ENCODE measurements at regions of chr1 and their contacts with region 1.

Region 1: DNA sequence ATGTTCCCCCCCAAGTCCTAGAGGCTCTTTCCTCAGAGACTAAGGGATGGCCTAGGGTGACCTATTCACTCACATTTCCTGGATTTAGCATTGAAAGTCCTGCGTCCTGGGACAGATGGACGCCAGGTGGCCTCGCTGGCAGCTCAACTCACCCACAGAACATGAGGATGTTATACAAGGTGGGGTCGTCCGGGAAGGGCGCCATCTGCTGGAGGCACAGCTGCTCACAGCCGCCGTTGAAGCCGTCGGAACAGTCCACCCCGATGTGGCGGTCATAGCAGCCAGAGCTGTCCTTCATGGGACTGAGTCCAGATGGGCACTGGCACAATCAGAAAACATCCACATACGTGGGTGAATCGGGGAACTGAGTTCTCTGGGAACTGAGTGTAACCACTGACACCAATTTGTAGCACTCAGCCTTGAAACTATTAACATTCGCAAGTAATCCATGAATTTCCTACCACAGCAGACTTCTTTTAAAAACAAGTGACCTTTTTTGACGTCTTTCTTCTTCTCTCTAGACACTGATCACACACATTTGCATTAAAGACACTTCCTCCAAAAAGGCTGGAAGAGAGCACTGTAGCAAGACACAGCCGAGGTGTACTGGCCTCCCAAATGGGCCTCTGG is 215.4 kb downstream of the ASTN1 start:
- DNase-seq: peak; percentile 80 to 96
- H3K4me3 ChIP-seq: no peak overlapping the region
- H3K27ac ChIP-seq: no peak overlapping the region
- H3K4me1 ChIP-seq: peaks cover 0 to 11% (median 1%) of the 10 kb centered on the region in 4 experiments; a peak in 2 of 7 replicates
- H3K27me3 ChIP-seq: no peaks in the 10 kb centered on the region; a peak in 1 of 7 replicates
- CTCF ChIP-seq: peak; percentile 99
- EP300 ChIP-seq: no peak
- POLR2A ChIP-seq: no peak
- RAD21 ChIP-seq: peak; percentile 77 to 83

Region 2: GRCh38 chr1:176773038-176773437 is 176.1 kb before region 1 on chr1:
- CTCF ChIA-PET with region 1: no interaction called
- POLR2A ChIA-PET with region 1: no interaction called
- DNase-seq: no peak
- H3K4me3 ChIP-seq: no peak overlapping the region
- H3K27ac ChIP-seq: no peak overlapping the region
- H3K4me1 ChIP-seq: no peaks in the 10 kb centered on the region
- H3K27me3 ChIP-seq: no peaks in the 10 kb centered on the region
- CTCF ChIP-seq: no peak
- EP300 ChIP-seq: no peak
- POLR2A ChIP-seq: no peak
- RAD21 ChIP-seq: no peak

Region 3: GRCh38 chr1:176897350-176898236 is 51.6 kb before region 1 on chr1:
- CTCF ChIA-PET with region 1: interaction called, 279 read pairs
- POLR2A ChIA-PET with region 1: no interaction called
- DNase-seq: peak; percentile 70 to 94
- H3K4me3 ChIP-seq: peak overlapping the region in 3 of 4 experiments; percentile 10 to 59 (median 22); a peak in 5 of 8 replicates
- H3K27ac ChIP-seq: no peak overlapping the region
- H3K4me1 ChIP-seq: no peaks in the 10 kb centered on the region
- H3K27me3 ChIP-seq: no peaks in the 10 kb centered on the region; a peak in 1 of 7 replicates
- CTCF ChIP-seq: peak; percentile 84 to 89 (median 87)
- EP300 ChIP-seq: no peak
- POLR2A ChIP-seq: no peak
- RAD21 ChIP-seq: peak; percentile 89 to 92

Region 4: GRCh38 chr1:176976225-176976624 is 27.1 kb after region 1 on chr1:
- CTCF ChIA-PET with region 1: interaction called, 16 read pairs
- POLR2A ChIA-PET with region 1: no interaction called
- DNase-seq: no peak
- H3K4me3 ChIP-seq: no peak overlapping the region
- H3K27ac ChIP-seq: no peak overlapping the region
- H3K4me1 ChIP-seq: no peaks in the 10 kb centered on the region
- H3K27me3 ChIP-seq: no peaks in the 10 kb centered on the region
- CTCF ChIP-seq: no peak
- EP300 ChIP-seq: no peak
- POLR2A ChIP-seq: no peak
- RAD21 ChIP-seq: no peak

Region 5: DNA sequence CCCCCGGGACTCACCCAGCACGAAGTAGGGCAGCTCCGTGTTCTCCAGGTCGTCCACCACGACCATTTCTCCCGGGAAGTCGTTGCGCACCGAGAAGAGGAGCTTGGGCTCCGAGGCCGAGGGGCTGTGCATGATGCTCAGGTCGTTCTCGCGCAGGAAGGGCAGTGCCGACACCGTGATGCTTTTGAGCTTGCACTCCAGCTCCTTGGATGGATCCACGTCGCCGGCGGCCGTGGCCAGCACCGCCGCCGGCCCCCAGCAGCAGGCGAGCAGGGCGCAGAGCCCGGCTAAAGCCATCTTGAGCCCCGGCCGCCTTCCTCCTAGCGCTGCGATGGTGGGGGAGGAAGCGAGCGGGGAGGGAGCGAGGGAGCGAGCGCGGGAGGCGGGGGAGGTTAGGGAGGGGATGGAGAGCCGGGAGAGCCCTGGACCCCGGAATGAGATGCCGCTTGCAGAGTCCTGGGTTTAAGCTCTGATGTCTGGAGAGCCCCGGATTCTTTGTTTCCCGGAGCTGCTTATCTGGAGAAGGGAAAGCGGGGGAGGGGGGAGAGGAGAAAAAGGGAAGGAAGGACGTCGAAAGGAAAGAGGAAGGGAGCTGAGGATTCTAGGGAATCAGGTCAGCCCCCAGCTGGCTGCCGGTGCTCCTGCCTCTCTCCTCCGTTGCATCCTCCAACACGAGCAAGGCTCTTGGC is 215.4 kb after region 1 on chr1 and contains the start of gene ASTN1:
- CTCF ChIA-PET with region 1: interaction called, 23 read pairs
- POLR2A ChIA-PET with region 1: no interaction called
- DNase-seq: peak in 1 of 2 experiments; percentile 78
- H3K4me3 ChIP-seq: peak within 1 kb of the TSS; percentile 80 to 86 (median 82)
- H3K27ac ChIP-seq: no peak within 1 kb of the TSS
- H3K4me1 ChIP-seq: peaks cover 0 to 5% (median 4%) of the 10 kb centered on the region in 4 experiments; a peak in 4 of 7 replicates
- H3K27me3 ChIP-seq: peaks cover 7 to 42% (median 34%) of the 10 kb centered on the region in 4 experiments
- CTCF ChIP-seq: no peak
- EP300 ChIP-seq: no peak
- POLR2A ChIP-seq: no peak
- RAD21 ChIP-seq: 0 out of 4 replicates have a peak, but pooled peaks of 1 of the 2 experiments have one; percentile 2
- total RNA-seq, gene ASTN1: 4.1 and 4.3 TPM in 2 replicates

Region 6: DNA sequence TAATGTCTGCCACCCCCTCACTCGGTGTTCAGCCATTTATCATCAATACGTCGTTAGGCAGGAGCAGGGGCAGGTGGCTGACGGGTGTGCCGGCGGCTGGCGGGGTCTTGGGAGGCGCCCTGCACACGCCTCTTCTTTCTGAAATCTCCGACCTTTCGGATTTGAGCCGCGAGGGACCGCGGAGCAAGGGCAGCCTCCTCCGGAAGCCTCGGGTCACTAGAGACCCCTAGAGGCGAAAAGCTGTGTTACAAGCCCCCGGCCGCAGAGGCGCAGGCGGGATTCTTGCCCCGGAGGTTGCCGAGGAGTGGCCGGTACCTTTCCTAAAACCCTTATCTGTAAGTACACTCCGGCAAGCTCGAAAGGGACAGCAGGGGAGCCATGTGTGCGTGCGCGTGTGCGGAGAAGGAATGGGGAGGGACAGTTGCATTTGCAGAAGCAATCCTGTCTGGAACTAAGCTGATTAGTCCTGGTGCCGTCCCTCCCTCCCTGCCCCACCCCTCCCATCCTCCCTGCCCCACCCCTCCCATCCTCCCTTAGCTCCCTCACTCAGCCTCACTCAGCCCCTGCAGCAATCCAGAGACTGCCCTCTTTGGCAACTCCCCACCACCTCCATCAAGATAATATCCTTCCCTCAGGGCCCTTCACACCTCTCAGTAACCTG is 232.6 kb after region 1 on chr1:
- CTCF ChIA-PET with region 1: interaction called, 70 read pairs
- POLR2A ChIA-PET with region 1: no interaction called
- DNase-seq: peak; percentile 56 to 96
- H3K4me3 ChIP-seq: peak overlapping the region; percentile 27 to 60 (median 56); a peak in 7 of 8 replicates
- H3K27ac ChIP-seq: no peak overlapping the region
- H3K4me1 ChIP-seq: peaks cover 0 to 6% (median 2%) of the 10 kb centered on the region in 4 experiments; a peak in 4 of 7 replicates
- H3K27me3 ChIP-seq: peaks cover 2 to 18% (median 14%) of the 10 kb centered on the region in 4 experiments; a peak in 5 of 7 replicates
- CTCF ChIP-seq: peak; percentile 68 to 94 (median 90)
- EP300 ChIP-seq: no peak
- POLR2A ChIP-seq: no peak
- RAD21 ChIP-seq: peak; percentile 87 to 89

Measured in H1 (cell line).